ENCODE measurements at regions of chr15 and their contacts with region 1.

Region 1: GRCh38 chr15:99504823-99505551 is 60.8 kb upstream of the MEF2A start:
- DNase-seq: peak; percentile 25
- H3K4me3 Mint-ChIP-seq: no peak overlapping the region
- H3K27ac Mint-ChIP-seq: no peak overlapping the region
- H3K4me1 Mint-ChIP-seq: peaks cover 38% of the 10 kb centered on the region
- H3K27me3 Mint-ChIP-seq: no peaks in the 10 kb centered on the region

Region 2: GRCh38 chr15:99042892-99043291 is 462.1 kb before region 1 on chr15:
- CTCF ChIA-PET with region 1: no interaction called
- intact Hi-C with region 1: no loop called
- DNase-seq: no peak
- H3K4me3 Mint-ChIP-seq: no peak overlapping the region
- H3K27ac Mint-ChIP-seq: no peak overlapping the region
- H3K4me1 Mint-ChIP-seq: no peaks in the 10 kb centered on the region
- H3K27me3 Mint-ChIP-seq: peaks cover 19% of the 10 kb centered on the region

Region 3: DNA sequence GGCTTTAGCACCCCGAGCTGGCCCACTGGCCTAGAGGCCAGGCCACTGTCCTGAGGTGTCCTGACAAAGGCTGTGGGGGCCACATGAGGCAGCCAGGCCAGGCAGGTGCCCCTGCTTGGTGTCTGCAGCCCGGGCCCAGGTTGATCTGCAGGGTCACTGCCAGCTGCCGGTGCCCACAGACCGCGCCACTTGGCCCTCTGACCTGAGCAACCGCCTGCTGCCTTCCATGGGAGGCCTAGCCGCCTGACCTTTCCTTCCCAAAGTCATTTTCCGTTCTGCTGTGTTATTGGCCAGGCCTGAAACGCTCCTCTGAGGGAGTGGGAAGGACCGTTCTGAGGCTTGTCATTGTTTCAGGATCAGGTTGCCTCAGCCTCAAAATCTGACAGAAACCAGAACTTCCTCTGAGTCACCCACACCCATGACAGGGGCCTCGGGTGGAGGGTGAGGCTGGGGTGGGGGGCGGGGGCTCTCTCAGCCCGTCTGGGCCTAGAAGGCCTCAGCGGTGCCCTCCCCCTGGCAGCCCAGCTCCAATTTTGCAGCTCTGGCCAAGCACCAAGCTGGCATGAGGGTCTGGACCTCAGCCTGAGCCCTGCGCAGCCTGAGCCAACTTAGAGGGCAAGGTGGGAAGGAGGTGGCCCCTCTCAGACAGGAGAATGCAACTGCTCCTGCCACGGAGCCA is 79.9 kb before region 1 on chr15:
- CTCF ChIA-PET with region 1: no interaction called
- intact Hi-C with region 1: loop called (anchors 1 kb)
- DNase-seq: peak; percentile 83
- H3K4me3 Mint-ChIP-seq: no peak overlapping the region
- H3K27ac Mint-ChIP-seq: peak overlapping the region; percentile 53
- H3K4me1 Mint-ChIP-seq: peaks cover 55% of the 10 kb centered on the region
- H3K27me3 Mint-ChIP-seq: no peaks in the 10 kb centered on the region

Region 4: DNA sequence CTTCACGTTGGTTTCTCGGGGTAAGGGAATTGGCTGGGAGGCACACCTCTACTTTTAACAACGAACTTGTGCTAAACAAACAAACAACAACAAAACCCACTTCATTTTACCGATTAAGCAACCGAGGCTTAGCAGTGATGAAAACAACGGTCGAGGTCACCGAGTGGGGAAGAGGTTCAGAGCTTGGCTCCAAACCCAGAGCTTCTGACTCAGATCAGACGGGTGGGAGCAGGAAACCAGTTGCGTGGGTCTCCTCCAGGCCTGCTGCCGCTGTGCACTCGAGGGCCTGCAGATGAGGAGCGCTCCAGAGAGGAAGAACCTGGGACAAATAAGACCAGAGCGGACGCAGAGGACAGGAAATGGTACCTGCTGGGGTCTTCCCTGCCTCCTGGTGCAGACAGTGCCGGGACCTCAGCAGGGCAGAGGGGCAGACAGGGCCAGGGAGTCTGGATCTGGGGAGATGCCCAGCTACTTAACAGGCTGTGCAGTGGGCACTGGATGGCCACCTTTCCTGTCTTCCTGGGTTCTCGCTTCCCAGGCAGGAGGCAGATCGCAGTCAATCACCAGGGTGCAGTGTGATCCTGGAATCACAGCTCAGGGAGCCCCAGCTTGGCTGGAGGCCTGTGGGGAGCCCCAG is 38.2 kb before region 1 on chr15:
- CTCF ChIA-PET with region 1: no interaction called
- intact Hi-C with region 1: no loop called
- DNase-seq: no peak
- H3K4me3 Mint-ChIP-seq: no peak overlapping the region
- H3K27ac Mint-ChIP-seq: no peak overlapping the region
- H3K4me1 Mint-ChIP-seq: no peaks in the 10 kb centered on the region
- H3K27me3 Mint-ChIP-seq: no peaks in the 10 kb centered on the region

Measured in activated naive CD4-positive, alpha-beta T cell treated with anti-CD3 and anti-CD28 coated beads for 36 hours (primary cell).